ENCODE measurements at regions of chr11 and their contacts with region 1.

Region 1: GRCh38 chr11:44565211-44565952 is at the start of gene CD82:
- DNase-seq: peak; percentile 100
- ATAC-seq: peak; percentile 97
- total RNA-seq, gene CD82: 47.7 TPM

Region 2: GRCh38 chr11:44582636-44583035 is 17.3 kb after region 1 on chr11:
- intact Hi-C with region 1: loop called (anchors 2 kb)
- DNase-seq: no peak
- ATAC-seq: no peak

Region 3: DNA sequence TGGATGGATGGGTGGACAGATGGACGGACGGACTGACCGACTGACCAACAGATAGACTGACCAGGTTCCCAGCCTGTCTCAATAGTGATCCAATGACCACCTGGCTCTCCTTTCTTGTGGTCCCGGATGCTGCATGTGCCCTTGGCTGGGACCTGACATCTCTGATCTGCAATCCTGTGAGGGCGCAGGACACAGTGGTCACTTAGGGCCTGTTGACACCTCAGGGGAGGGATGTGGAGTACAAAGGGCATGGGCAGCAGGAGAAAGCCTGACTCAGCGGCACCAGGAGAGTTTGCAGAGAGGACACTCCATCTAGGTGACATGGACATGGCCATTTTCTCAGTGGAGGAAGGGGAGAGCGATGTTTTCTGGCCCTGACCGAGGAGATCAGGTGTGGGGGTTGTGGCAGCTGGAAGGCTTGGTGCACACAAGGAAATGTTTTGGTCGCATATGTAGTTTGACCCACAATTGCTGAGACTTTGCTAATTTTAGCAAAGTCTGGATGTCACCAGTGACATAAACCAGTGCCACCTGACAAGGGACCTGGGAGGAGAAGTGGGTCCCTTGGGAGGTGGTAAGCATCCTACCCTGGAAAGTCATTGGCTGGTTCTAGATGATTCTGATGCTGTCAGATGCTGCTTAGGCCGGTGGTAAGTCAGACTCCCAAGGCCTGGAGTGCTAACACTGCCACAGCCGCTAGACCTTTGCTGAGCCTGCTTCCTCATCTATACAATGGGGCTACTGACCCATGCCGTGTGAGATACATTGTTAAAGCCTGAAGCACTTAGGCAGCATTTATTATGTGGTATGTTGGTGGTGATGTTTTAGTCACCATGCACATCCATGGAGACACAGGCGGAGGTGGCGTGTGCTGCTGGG is 50.8 kb after region 1 on chr11:
- intact Hi-C with region 1: loop called (anchors 2 kb)
- DNase-seq: peak; percentile 22
- ATAC-seq: no peak

Region 4: DNA sequence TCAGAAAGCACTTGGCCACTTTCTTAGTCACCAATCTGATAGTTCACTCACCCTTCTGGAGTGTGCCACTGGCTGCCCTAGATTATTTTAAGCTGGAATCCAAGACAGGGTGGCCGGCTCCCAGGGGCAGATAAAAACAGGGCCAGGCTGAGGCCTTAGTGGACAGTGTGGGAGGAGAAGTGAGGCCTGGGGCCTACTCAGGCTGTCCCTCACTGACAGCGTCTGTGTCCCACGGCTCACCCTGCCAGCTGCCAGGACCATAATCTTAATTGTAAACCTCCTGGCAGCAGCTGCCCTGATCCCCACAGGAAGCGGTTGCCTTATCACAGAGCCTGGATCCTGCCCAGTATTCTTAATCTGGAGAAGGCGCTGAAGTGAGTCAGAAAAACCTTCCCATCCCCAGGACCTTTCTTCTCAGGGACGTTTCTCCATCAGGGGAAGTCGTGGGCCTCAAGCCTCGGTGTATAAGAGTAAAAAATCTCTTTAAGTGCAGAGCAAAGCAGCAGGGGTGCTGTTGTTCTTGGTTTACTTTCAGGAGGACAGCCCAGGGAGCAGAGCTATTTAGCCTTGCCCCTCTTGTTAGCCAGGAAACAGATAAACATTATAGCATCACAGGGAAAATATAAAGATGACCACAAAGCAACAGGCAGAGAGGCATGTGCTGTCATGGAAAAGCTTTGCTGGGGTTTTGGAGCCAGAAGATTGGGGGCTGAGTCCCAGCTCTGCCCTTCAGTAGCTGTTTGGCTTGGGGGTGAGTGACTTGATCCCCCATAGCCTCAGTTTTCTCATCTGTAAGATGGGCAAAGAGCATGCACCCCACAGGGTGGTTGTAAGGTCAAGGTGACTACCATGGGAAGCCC is 201.0 kb after region 1 on chr11:
- intact Hi-C with region 1: loop called (anchors 2 kb)
- DNase-seq: peak; percentile 85
- ATAC-seq: peak; percentile 86

Measured in Right ventricle myocardium inferior (tissue), 1 donor.